CD4-positive, alpha-beta memory T cell (primary cell): ENCODE measurements at regions of chr17 and their contacts with region 1.

Region 1: DNA sequence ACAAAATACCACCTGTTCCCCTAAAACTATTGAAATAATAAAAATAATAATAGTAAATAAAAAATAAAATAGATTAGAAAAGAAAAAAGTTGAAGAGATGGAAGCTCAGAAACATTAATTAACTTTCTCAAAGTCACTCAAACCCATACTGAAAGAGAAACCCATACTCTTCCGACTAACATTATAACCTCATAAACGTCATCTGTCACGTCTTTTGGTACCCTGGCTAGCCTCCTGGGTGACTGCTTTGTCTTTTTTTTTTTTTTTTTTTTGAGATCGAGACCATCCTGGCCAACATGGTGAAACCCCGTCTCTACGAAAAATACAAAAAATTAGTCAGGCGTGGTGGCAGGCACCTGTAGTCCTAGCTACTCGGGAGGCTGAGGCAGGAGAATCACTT is 7.6 kb downstream of the SLFN12L start:
- DNase-seq: no peak
- H3K4me3 ChIP-seq: no peak overlapping the region
- H3K4me3 Mint-ChIP-seq: peak overlapping the region in 7 of 8 donors; percentile 24 to 83 (median 65)
- H3K27ac ChIP-seq: no peak overlapping the region
- H3K27ac Mint-ChIP-seq: peak overlapping the region; percentile 26 to 93 (median 72)
- H3K4me1 ChIP-seq: peaks cover 70% of the 10 kb centered on the region
- H3K4me1 Mint-ChIP-seq: peaks cover 61 to 85% (median 73%) of the 10 kb centered on the region in 4 donors
- H3K27me3 ChIP-seq: no peaks in the 10 kb centered on the region
- H3K27me3 Mint-ChIP-seq: no peaks in the 10 kb centered on the region

Region 2: DNA sequence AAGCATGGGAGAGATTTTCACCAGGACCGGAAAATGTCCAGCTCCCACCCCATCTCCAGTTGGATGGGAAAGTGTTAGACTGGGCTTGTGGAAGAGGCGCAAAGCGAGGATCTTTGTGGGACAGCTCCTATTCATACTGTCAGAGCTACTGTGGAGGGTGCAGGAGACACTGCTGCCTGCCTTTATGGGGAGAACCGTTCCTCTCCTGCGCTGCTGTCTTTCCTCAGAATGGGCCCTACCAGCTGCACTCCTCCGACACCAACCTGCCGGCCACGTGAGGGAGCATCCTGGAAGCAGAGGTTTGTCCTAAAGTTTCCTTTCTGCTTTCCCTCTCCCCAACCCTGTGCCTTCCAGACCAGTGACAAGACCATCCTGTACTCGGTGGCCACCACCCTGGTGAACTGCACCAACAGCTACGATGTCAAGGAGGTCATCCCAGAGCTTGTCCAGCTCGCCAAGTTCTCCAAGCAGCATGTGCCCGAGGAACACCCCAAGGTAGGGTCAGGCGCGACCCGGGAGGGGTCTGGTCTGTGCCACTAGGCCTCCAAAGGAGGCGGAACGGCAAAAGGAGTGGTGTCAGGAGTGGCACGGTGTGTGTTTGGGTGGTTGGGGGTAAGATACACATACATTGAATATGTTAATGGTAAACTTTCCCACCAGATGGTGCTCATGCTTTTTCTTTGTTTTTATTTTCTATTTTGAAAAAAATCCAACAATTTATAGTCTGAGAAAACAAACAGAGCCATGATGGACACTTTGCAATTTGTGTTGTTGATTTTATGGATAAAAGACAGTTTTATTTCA is 358.7 kb before region 1 on chr17:
- CTCF ChIA-PET with region 1: interaction called, 111 read pairs
- POLR2A ChIA-PET with region 1: interaction called, 117 read pairs
- intact Hi-C with region 1: loop called (anchors 1 kb)
- DNase-seq: peak; percentile 41 to 75 (median 72)
- H3K4me3 ChIP-seq: peak overlapping the region in 1 of 2 donors; percentile 18
- H3K4me3 Mint-ChIP-seq: peak overlapping the region; percentile 51 to 81 (median 68)
- H3K27ac ChIP-seq: no peak overlapping the region
- H3K27ac Mint-ChIP-seq: peak overlapping the region; percentile 82 to 93 (median 91)
- H3K4me1 ChIP-seq: peaks cover 41% of the 10 kb centered on the region
- H3K4me1 Mint-ChIP-seq: peaks cover 32 to 60% (median 42%) of the 10 kb centered on the region in 4 donors
- H3K27me3 ChIP-seq: no peaks in the 10 kb centered on the region
- H3K27me3 Mint-ChIP-seq: no peaks in the 10 kb centered on the region

Region 3: DNA sequence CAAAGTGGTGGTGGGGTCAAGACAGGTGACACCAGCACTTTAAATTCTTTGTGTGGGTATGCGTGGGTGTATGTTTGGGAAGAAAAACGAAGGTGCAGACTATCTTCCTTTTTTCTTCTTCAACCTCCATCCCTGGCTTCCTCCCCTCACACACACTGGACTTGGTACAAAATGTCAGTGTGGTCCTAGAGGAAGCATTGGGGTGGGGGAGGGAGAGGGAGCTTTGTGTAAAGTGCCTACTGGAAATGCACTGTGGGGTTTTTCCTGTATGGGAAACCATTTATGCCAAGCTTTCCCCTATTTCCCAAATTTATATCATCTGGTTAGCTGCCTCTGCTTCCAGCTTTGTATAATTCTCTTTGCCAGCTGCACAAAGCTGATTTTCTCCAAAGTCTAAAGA is 36.8 kb before region 1 on chr17:
- CTCF ChIA-PET with region 1: interaction called, 117 read pairs
- POLR2A ChIA-PET with region 1: interaction called, 234 read pairs
- intact Hi-C with region 1: no loop called
- DNase-seq: no peak
- H3K4me3 ChIP-seq: no peak overlapping the region
- H3K4me3 Mint-ChIP-seq: no peak overlapping the region
- H3K27ac ChIP-seq: no peak overlapping the region
- H3K27ac Mint-ChIP-seq: peak overlapping the region; percentile 30 to 87 (median 43)
- H3K4me1 ChIP-seq: peaks cover 45% of the 10 kb centered on the region
- H3K4me1 Mint-ChIP-seq: peaks cover 33 to 79% (median 51%) of the 10 kb centered on the region in 4 donors
- H3K27me3 ChIP-seq: no peaks in the 10 kb centered on the region
- H3K27me3 Mint-ChIP-seq: no peaks in the 10 kb centered on the region

Region 4: DNA sequence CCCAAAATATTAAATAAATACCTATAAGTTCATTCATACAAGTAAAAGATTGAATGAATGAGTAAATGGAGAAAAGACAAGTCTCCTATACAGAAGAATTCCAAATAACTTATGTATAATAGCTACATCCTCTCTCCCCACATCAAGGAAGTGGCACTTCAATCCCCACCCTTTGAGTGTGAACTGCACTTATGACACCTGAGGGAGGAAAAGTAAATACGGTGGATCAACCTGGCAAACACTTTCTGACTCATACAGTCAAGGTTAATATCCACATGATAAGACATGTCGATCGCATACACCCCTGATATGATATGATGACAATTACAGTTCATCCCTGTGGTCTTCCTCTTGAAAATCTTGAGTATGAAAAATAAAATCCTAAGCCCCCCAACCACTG is 10.4 kb before region 1 on chr17:
- CTCF ChIA-PET with region 1: interaction called, 107 read pairs
- POLR2A ChIA-PET with region 1: interaction called, 208 read pairs
- intact Hi-C with region 1: loop called (anchors 1 kb)
- DNase-seq: peak in 1 of 5 donors; percentile 57
- H3K4me3 ChIP-seq: peak overlapping the region in 1 of 2 donors; percentile 23
- H3K4me3 Mint-ChIP-seq: peak overlapping the region; percentile 17 to 83 (median 68)
- H3K27ac ChIP-seq: peak overlapping the region; percentile 0
- H3K27ac Mint-ChIP-seq: peak overlapping the region; percentile 27 to 91 (median 72)
- H3K4me1 ChIP-seq: peaks cover 74% of the 10 kb centered on the region
- H3K4me1 Mint-ChIP-seq: peaks cover 71 to 98% (median 86%) of the 10 kb centered on the region in 4 donors
- H3K27me3 ChIP-seq: no peaks in the 10 kb centered on the region
- H3K27me3 Mint-ChIP-seq: no peaks in the 10 kb centered on the region

Region 5: DNA sequence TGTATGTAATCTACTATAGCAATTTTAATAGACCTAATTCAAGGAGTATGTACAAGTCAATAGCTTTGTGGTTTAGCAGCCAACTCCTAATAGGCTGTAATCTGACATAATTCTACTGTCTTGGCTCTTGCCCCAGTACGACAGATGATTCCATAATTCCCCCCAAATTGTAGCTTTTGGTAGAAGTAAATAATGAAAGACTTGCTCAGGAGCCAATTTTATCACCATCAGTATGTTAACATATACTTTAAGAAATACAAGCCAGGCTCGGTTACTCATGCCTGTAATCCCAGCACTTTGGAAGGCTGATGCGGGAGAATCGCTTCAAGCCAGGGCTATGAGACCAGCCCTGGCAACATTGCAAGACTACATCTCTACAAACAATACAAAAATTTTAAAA is 111.2 kb after region 1 on chr17:
- CTCF ChIA-PET with region 1: no interaction called
- POLR2A ChIA-PET with region 1: no interaction called
- intact Hi-C with region 1: no loop called
- DNase-seq: no peak
- H3K4me3 ChIP-seq: no peak overlapping the region
- H3K4me3 Mint-ChIP-seq: no peak overlapping the region
- H3K27ac ChIP-seq: no peak overlapping the region
- H3K27ac Mint-ChIP-seq: no peak overlapping the region
- H3K4me1 ChIP-seq: no peaks in the 10 kb centered on the region
- H3K4me1 Mint-ChIP-seq: peaks cover 0 to 1% (median under 1%) of the 10 kb centered on the region in 4 donors
- H3K27me3 ChIP-seq: no peaks in the 10 kb centered on the region
- H3K27me3 Mint-ChIP-seq: no peaks in the 10 kb centered on the region

Region 6: GRCh38 chr17:36001862-36002603 is 472.2 kb after region 1 on chr17:
- CTCF ChIA-PET with region 1: no interaction called
- POLR2A ChIA-PET with region 1: no interaction called
- intact Hi-C with region 1: no loop called
- DNase-seq: no peak
- H3K4me3 ChIP-seq: no peak overlapping the region
- H3K4me3 Mint-ChIP-seq: no peak overlapping the region
- H3K27ac ChIP-seq: no peak overlapping the region
- H3K27ac Mint-ChIP-seq: no peak overlapping the region
- H3K4me1 ChIP-seq: no peaks in the 10 kb centered on the region
- H3K4me1 Mint-ChIP-seq: peaks cover 3 to 7% (median 5%) of the 10 kb centered on the region in 4 donors
- H3K27me3 ChIP-seq: no peaks in the 10 kb centered on the region
- H3K27me3 Mint-ChIP-seq: peaks cover 2 to 8% of the 10 kb centered on the region in 2 donors